Dorsolateral prefrontal cortex (tissue), 120 donors: ENCODE measurements at regions of chr1 and their contacts with region 1.

Region 1: GRCh38 chr1:84433258-84434080 is 35.2 kb downstream of the DNASE2B start:
- DNase-seq: peak in 8 of 10 donors; percentile 34 to 67 (median 54)
- H3K4me3 ChIP-seq: peak overlapping the region; percentile 30 to 70 (median 53)
- H3K27ac ChIP-seq: peak overlapping the region in 58 of 59 donors; percentile 12 to 88 (median 74)
- H3K27me3 ChIP-seq: no peaks in the 10 kb centered on the region
- CTCF ChIP-seq: peak; percentile 75 to 98 (median 88)

Region 2: GRCh38 chr1:84143796-84144565 is 289.5 kb before region 1 on chr1 and contains the start of gene PRKACB:
- intact Hi-C with region 1: loop called (anchors 2 kb)
- DNase-seq: no peak
- H3K4me3 ChIP-seq: peak within 1 kb of the TSS in 46 of 59 donors; percentile 1 to 47 (median 20)
- H3K27ac ChIP-seq: peak within 1 kb of the TSS in 56 of 59 donors; percentile 2 to 80 (median 58)
- H3K27me3 ChIP-seq: no peaks in the 10 kb centered on the region
- CTCF ChIP-seq: peak in 1 of 56 donors; percentile 13
- total RNA-seq, gene PRKACB: 156 to 555 (median 433) TPM

Region 3: GRCh38 chr1:84298328-84298683 is 135.2 kb before region 1 on chr1:
- intact Hi-C with region 1: loop called (anchors 1 to 5 kb)
- DNase-seq: peak; percentile 56 to 85 (median 64)
- H3K4me3 ChIP-seq: peak overlapping the region; percentile 62 to 96 (median 82)
- H3K27ac ChIP-seq: peak overlapping the region; percentile 75 to 98 (median 95)
- H3K27me3 ChIP-seq: peaks cover 0 to 3% (median 0%) of the 10 kb centered on the region in 45 donors
- CTCF ChIP-seq: peak in 17 of 56 donors; percentile 4 to 45 (median 19)

Region 4: DNA sequence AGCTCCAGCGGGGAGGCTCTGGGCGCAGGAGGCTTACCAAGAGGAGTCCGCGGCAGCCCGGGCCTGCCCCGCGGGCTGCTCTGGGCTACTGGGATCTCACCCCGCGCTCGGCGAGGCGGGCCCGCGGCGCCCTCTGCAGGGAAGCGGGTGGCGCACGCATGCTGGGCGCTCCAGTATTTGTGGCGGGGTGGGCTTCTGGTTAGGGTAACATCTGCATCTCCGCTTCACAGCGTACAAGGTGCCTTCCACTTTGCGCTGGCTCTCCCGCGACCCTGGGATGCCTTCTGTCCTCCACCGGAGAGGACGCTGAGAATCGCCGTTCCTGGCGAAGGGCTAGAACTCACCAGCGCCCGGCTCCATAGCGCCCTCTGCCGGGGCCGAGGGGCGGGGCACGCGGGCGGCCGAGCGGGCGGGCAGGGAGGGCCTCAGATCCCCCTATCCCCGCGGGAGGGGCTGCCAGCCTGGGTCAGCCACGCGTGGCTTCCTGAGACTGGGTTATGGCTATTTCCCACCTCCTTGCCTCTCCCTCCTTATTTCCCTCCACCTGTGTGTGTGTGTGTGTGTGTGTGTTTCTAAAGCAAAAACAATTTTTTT is 187.3 kb after region 1 on chr1:
- intact Hi-C with region 1: loop called (anchors 5 kb)
- DNase-seq: peak; percentile 50 to 90 (median 64)
- H3K4me3 ChIP-seq: peak overlapping the region; percentile 47 to 93 (median 74)
- H3K27ac ChIP-seq: peak overlapping the region in 57 of 59 donors; percentile 23 to 94 (median 87)
- H3K27me3 ChIP-seq: no peaks in the 10 kb centered on the region
- CTCF ChIP-seq: peak in 55 of 56 donors; percentile 86 to 100 (median 98)

Region 5: GRCh38 chr1:84936116-84936810 is 502.8 kb after region 1 on chr1:
- intact Hi-C with region 1: loop called in 1 of 2 experiments (anchors 10 kb)
- DNase-seq: peak in 3 of 10 donors; percentile 30 to 46 (median 35)
- H3K4me3 ChIP-seq: peak overlapping the region in 13 of 59 donors; percentile 8 to 37 (median 25)
- H3K27ac ChIP-seq: no peak overlapping the region
- H3K27me3 ChIP-seq: no peaks in the 10 kb centered on the region
- CTCF ChIP-seq: peak; percentile 78 to 98 (median 91)